ENCODE measurements at regions of chr13 and their contacts with region 1.

Region 1: GRCh38 chr13:51286135-51287002 is 53.1 kb upstream of the SERPINE3 start:
- DNase-seq: peak; percentile 64 to 89 (median 86)
- ATAC-seq: peak; percentile 85
- H3K4me3 ChIP-seq: no peak overlapping the region
- H3K4me1 ChIP-seq: no peaks in the 10 kb centered on the region
- CTCF ChIP-seq: peak; percentile 76

Region 2: GRCh38 chr13:50672018-50672417 is 614.4 kb before region 1 on chr13:
- intact Hi-C with region 1: no loop called
- DNase-seq: no peak
- ATAC-seq: no peak
- H3K4me3 ChIP-seq: no peak overlapping the region
- H3K4me1 ChIP-seq: no peaks in the 10 kb centered on the region
- CTCF ChIP-seq: no peak

Region 3: GRCh38 chr13:51041126-51041525 is 245.2 kb before region 1 on chr13:
- intact Hi-C with region 1: no loop called
- DNase-seq: no peak
- ATAC-seq: no peak
- H3K4me3 ChIP-seq: no peak overlapping the region
- H3K4me1 ChIP-seq: no peaks in the 10 kb centered on the region
- CTCF ChIP-seq: no peak

Region 4: DNA sequence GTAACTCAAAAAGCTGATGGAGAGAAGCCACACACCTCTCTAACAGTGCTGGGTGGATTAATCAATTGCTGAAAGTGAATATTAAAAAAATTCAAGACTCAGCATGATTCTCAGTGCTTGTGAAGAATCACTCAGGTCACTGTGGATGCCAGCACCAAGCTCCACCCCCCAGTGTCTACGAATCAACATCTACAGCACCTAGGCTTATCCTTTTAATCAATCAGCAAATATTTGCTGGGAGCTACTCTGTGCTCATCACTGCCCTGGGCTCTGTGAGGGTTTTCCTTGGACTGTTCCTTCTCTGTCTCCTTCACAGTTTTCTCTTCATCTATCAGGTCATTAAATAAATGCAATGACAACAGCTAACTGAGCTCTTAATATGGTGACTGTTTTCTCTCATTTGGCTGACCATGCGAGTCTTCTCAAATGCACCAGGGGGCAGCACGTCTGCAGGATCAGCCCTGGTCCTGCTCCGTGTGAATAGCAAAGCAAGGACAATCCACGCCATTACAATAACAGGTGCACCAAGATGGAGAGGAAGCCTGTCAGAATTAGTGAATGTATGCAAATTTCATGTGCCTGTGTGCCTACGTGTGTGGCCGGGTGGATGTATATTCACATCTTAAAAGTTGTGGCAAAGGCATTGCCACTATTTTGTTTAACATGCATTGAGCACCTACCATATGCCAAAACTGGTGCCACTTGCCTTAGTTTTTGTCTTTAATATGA is 160.7 kb before region 1 on chr13:
- intact Hi-C with region 1: loop called in 1 of 2 experiments (anchors 10 kb)
- DNase-seq: peak in 2 of 3 donors; percentile 36 to 57
- ATAC-seq: peak; percentile 87
- H3K4me3 ChIP-seq: no peak overlapping the region
- H3K4me1 ChIP-seq: no peaks in the 10 kb centered on the region
- CTCF ChIP-seq: peak; percentile 63

Region 5: DNA sequence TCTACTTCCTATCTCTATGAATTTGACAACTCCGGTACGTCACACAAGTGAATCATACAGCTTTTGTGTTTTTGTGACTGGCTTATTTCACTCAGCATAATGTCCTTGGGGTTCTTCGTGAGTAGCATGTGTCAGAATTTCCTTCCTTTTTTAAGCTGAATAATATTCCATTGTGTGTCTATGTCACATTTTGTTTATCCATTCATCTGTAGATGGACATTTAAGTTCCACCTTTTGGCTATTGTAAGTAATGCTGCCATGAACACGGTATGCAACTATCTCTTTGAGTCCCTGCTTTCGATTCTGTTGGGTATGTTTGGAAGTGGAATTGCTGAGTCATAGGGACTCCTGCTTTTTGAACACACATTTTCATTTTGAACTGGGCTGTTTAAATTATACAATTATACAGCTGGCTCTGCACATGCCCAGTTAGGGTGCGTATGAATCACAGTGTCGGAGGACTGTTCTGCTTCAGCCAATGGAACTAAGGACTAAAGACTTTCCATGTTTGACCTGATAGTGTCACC is 132.3 kb before region 1 on chr13:
- intact Hi-C with region 1: loop called in 1 of 2 experiments (anchors 5 kb)
- DNase-seq: no peak
- ATAC-seq: peak; percentile 32
- H3K4me3 ChIP-seq: no peak overlapping the region
- H3K4me1 ChIP-seq: no peaks in the 10 kb centered on the region
- CTCF ChIP-seq: no peak

Region 6: DNA sequence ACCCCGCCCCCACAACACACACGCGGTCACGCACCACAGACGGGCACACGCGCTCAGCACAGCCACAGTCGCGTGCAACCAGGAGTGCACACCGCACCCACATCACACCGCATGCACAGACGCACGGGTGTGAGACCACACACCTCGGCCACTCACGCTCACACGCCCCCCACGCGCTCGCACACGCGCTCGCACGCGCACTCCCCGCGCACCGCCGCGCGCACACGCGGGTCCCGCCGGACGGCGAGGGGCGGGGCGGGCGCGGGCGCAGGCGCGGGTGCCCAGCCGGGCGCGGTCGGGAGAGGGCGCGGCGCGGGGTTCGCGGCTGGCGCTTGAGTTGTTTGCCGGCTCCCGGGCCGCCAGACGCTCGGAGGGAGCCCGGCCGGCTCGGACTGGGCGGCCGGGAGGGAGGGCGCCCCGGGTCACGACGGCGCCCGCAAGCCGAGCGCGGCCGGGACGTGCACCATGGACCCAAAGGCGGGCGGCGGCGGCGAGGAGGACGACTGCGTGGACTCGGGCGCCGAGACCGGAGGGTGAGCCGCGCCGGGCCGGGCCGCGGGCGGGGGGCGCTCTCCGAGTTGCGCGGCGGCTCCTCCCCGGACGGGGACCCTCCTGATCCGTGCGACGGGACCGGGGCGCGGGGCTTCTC is 64.2 kb before region 1 on chr13 and contains the start of gene FAM124A:
- intact Hi-C with region 1: loop called in 1 of 2 experiments (anchors 5 kb)
- DNase-seq: peak in 2 of 3 donors; percentile 41 to 60
- ATAC-seq: peak; percentile 91
- H3K4me3 ChIP-seq: peak within 1 kb of the TSS; percentile 26
- H3K4me1 ChIP-seq: peaks cover 5% of the 10 kb centered on the region
- CTCF ChIP-seq: peak; percentile 27
- total RNA-seq, gene FAM124A: 1.2 to 15.2 (median 2.1) TPM

Measured in mucosa of descending colon (tissue), 3 donors.